ENCODE measurements at regions of chr17 and their contacts with region 1.

Region 1: DNA sequence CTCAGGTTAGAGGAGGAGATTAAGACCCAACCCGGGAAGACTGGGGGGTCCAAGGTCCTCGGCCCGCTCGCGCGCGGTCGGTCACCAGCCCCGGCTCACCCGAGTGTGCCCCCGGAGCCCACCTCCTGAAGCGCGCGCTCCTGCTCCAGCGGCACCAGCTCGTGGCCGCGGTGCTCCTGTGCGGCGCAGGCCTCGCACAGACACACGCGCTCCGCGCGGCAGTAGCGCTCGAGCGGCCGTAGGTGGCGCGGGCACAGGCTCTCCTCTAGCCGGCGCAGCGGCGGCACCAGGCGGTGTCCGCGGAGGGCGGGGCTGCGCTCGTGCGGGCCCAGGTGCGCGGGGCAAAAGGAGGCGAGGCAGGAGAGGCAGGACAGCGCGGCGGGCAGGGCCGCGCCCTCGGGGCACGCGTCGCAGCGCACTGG is 618 bp downstream of the TRIM47 start:
- DNase-seq: peak; percentile 88
- H3K4me3 ChIP-seq: peak overlapping the region; percentile 62 to 92 (median 80)
- H3K27ac ChIP-seq: peak overlapping the region; percentile 95 to 98 (median 97)
- H3K4me1 ChIP-seq: peaks cover 5 to 50% (median 46%) of the 10 kb centered on the region in 4 donors
- H3K27me3 ChIP-seq: no peaks in the 10 kb centered on the region
- CTCF ChIP-seq: peak; percentile 29 to 60 (median 44)
- EP300 ChIP-seq: no peak
- POLR2A ChIP-seq: no peak

Region 2: DNA sequence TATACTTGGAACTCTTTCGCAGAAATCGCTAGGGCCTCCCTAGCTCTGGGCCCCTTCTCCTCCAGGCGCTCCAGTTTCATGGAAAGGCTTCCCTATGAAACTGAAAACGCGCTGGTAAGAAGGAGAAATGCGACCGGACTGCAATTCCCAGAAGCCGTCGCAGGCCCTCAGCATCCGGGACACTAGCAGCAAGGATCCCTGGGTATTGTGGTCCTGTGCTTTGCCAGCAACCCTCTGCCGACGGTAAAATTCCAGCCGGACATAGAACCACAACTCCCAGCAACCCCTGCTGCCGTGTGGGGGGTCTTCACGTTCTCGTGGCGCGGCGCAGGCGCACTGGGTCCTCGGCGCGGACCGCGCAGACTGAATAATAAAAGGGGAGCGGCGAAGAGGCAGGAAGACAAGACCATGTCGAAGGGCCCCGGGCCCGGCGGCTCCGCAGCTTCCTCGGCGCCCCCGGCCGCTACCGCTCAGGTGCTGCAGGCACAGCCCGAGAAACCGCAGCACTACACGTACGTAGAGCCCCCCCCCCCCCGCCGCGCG is 93.2 kb before region 1 on chr17 and contains the start of gene UNK:
- intact Hi-C with region 1: loop called (anchors 5 kb)
- DNase-seq: peak; percentile 100
- H3K4me3 ChIP-seq: peak within 1 kb of the TSS; percentile 74 to 85 (median 78)
- H3K27ac ChIP-seq: peak within 1 kb of the TSS; percentile 95 to 99 (median 97)
- H3K4me1 ChIP-seq: peaks cover 0 to 49% (median 33%) of the 10 kb centered on the region in 4 donors
- H3K27me3 ChIP-seq: no peaks in the 10 kb centered on the region
- CTCF ChIP-seq: no peak
- EP300 ChIP-seq: peak in 1 of 4 donors; percentile 81
- POLR2A ChIP-seq: peak; percentile 43 to 76
- total RNA-seq, gene UNK: 18.9 to 29.6 (median 26.4) TPM

Region 3: GRCh38 chr17:75855310-75856081 is 22.3 kb before region 1 on chr17 and contains the start of gene WBP2:
- intact Hi-C with region 1: loop called (anchors 1 kb)
- DNase-seq: peak; percentile 100
- H3K4me3 ChIP-seq: peak within 1 kb of the TSS; percentile 79 to 97 (median 89)
- H3K27ac ChIP-seq: peak within 1 kb of the TSS; percentile 96 to 100 (median 98)
- H3K4me1 ChIP-seq: peaks cover 0 to 48% (median 39%) of the 10 kb centered on the region in 4 donors
- H3K27me3 ChIP-seq: no peaks in the 10 kb centered on the region
- CTCF ChIP-seq: peak; percentile 22 to 51 (median 32)
- EP300 ChIP-seq: no peak
- POLR2A ChIP-seq: peak; percentile 93 to 98
- total RNA-seq, gene WBP2: 44.2 to 73.1 (median 56.9) TPM

Region 4: GRCh38 chr17:75896415-75897159 is 18.8 kb after region 1 on chr17 and contains the start of gene TRIM65:
- intact Hi-C with region 1: loop called (anchors 1 kb)
- DNase-seq: peak; percentile 94
- H3K4me3 ChIP-seq: peak within 1 kb of the TSS; percentile 73 to 95 (median 83)
- H3K27ac ChIP-seq: peak within 1 kb of the TSS; percentile 95 to 98 (median 96)
- H3K4me1 ChIP-seq: peaks cover 0 to 39% (median 34%) of the 10 kb centered on the region in 4 donors
- H3K27me3 ChIP-seq: no peaks in the 10 kb centered on the region
- CTCF ChIP-seq: no peak
- EP300 ChIP-seq: no peak
- POLR2A ChIP-seq: peak; percentile 41 to 61
- total RNA-seq, gene TRIM65: 22.4 to 27.5 (median 25.1) TPM

Measured in sigmoid colon (tissue), 7 donors.